SK-N-SH (cell line): ENCODE measurements at regions of chr14 and their contacts with region 1.

Region 1: GRCh38 chr14:100440187-100440631 is 117.1 kb downstream of the SLC25A47 start:
- DNase-seq: peak; percentile 66
- H3K4me3 ChIP-seq: peak overlapping the region; percentile 0 to 12; a peak in 2 of 4 replicates
- H3K27ac ChIP-seq: peak overlapping the region; percentile 68 to 100
- H3K4me1 ChIP-seq: peaks cover 34 to 95% of the 10 kb centered on the region in 2 experiments
- H3K27me3 ChIP-seq: no peaks in the 10 kb centered on the region
- CTCF ChIP-seq: peak; percentile 72
- EP300 ChIP-seq: no peak
- RAD21 ChIP-seq: peak; percentile 89

Region 2: GRCh38 chr14:100417466-100417865 is 22.7 kb before region 1 on chr14:
- CTCF ChIA-PET with region 1: interaction called, 148 read pairs
- POLR2A ChIA-PET with region 1: interaction called, 45 read pairs
- DNase-seq: peak; percentile 85
- H3K4me3 ChIP-seq: no peak overlapping the region; a peak in 1 of 4 replicates
- H3K27ac ChIP-seq: peak overlapping the region; percentile 52 to 84
- H3K4me1 ChIP-seq: peaks cover 9 to 53% of the 10 kb centered on the region in 2 experiments
- H3K27me3 ChIP-seq: no peaks in the 10 kb centered on the region
- CTCF ChIP-seq: peak; percentile 88
- EP300 ChIP-seq: peak in 1 of 2 experiments; percentile 49; a peak in 1 of 4 replicates
- RAD21 ChIP-seq: peak; percentile 98

Region 3: DNA sequence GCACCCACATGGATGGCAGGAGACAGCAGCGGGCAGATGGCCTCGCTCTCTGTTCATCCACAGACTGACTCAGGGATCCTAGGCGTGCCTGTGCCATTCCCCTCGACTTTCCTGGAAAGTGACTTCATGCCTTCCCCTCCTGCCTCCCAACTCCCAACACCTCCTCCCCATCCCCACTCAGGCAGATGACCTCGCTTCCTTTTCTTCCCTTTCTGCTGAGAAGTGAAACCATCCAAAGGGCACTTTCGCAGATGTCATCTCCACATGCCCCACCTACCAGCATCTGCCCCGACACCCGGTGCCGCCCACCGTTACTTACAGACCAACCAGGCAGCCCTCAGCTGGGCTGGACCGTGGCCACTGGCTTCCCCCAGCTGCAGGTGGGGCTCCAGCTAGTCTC is 117.4 kb after region 1 on chr14:
- CTCF ChIA-PET with region 1: interaction called, 9 read pairs
- POLR2A ChIA-PET with region 1: interaction called, 10 read pairs
- DNase-seq: no peak
- H3K4me3 ChIP-seq: no peak overlapping the region
- H3K27ac ChIP-seq: peak overlapping the region in 1 of 2 experiments; percentile 78; a peak in 1 of 4 replicates
- H3K4me1 ChIP-seq: peaks cover 0 to 97% of the 10 kb centered on the region in 2 experiments; a peak in 1 of 4 replicates
- H3K27me3 ChIP-seq: no peaks in the 10 kb centered on the region
- CTCF ChIP-seq: no peak
- EP300 ChIP-seq: no peak
- RAD21 ChIP-seq: no peak

Region 4: GRCh38 chr14:100629696-100630095 is 189.5 kb after region 1 on chr14:
- CTCF ChIA-PET with region 1: no interaction called
- POLR2A ChIA-PET with region 1: no interaction called
- DNase-seq: no peak
- H3K4me3 ChIP-seq: no peak overlapping the region
- H3K27ac ChIP-seq: no peak overlapping the region
- H3K4me1 ChIP-seq: peaks cover 0 to 12% of the 10 kb centered on the region in 2 experiments; a peak in 1 of 4 replicates
- H3K27me3 ChIP-seq: peaks cover 10% of the 10 kb centered on the region; the same call in 1 of the 2 replicates
- CTCF ChIP-seq: no peak
- EP300 ChIP-seq: no peak
- RAD21 ChIP-seq: no peak

Region 5: DNA sequence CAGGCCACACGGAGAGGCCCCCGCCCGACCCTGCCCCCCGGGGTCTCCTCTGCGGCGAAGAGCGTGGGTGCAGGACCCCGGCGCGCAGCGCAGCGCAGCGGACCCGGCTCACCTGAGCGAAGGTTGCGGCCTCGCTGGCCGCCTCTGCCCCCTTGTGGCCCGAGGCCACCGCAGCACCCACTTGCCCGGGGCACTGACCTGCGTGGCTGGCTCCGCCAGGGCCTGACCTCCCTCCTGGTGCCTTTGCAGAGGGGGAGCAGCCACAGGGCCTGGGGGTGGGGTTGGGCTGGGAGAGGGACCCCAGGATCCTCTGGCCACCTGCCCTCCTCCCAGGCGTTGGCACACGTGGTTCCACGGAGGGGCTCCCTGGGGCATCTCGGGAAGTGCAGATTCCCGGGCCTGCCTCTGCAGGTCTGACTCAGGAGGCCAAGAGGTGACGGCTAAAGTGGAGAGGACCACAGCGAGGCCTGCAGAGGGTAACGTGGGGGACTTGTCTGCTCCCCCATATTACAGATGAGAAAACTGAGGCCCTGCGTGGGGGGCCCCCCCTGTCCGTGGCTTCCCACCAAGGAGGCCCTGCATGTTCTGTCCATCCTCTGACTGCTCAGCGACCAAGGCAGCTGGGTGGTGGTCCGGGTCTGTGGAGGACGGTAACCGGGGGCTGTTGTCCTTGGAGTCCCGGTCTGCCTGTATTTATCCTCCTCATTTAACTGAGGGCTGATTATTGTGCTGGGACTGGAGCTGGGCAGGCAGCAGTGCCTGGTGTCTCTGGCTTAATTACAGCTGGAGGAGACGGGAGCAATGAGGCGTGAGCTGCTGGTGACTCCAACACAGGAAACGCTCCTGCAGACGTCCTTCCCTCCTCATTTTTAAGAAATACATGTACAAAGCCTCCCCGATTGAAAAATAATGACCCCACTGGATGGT is 214.9 kb after region 1 on chr14:
- CTCF ChIA-PET with region 1: interaction called, 58 read pairs
- POLR2A ChIA-PET with region 1: interaction called, 6 read pairs
- DNase-seq: peak; percentile 84
- H3K4me3 ChIP-seq: no peak overlapping the region
- H3K27ac ChIP-seq: peak overlapping the region in 1 of 2 experiments; percentile 92; a peak in 2 of 4 replicates
- H3K4me1 ChIP-seq: peaks cover 0 to 75% of the 10 kb centered on the region in 2 experiments; a peak in 2 of 4 replicates
- H3K27me3 ChIP-seq: no peaks in the 10 kb centered on the region
- CTCF ChIP-seq: peak; percentile 59
- EP300 ChIP-seq: no peak
- RAD21 ChIP-seq: peak; percentile 58

Region 6: DNA sequence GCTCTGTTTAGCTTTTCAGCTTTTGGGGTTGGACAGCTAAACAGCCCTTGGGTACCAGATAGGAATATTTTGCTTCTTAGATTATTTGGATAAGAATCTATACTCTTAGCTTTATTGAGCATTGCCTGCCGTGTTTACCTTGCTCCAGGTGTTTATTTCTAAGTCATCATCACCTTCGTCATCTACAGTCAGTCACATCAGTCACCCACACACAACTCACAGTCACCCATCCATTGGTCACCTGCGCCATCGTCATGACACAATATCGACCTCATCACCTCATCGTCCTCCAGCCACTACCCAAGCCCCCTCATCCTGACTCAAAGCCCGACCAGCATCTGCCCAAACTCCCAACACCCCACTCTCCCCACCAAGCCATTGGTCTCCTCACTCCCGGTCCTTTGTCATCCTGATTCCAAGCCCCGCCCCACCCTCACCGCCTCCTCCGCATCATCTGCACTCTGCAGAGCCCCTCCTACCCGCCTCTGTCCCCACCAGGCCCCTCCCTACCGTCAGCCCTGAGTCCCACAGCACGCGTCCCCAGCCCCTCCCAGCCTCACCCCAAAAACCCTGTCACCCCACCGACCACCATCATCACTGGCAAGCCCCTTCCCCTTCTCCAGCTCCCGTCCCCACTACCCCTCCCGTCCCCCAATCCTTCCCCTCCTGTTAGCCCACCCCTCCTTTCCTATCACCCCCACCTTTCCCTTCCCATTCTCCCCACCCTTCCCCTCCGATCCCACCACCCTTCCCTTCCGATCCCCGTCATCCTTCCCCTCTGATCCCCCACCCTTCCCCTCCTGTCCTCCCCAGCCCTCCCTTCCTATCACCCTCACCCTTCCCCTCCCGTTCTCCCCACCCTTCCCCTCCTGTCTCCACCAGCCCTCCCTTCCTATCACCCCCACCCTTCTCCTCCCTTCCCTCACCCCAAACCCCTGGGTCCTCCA is 296.3 kb after region 1 on chr14:
- CTCF ChIA-PET with region 1: interaction called, 3 read pairs
- POLR2A ChIA-PET with region 1: interaction called, 17 read pairs
- DNase-seq: peak; percentile 69
- H3K4me3 ChIP-seq: no peak overlapping the region
- H3K27ac ChIP-seq: peak overlapping the region in 1 of 2 experiments; percentile 17; a peak in 2 of 4 replicates
- H3K4me1 ChIP-seq: peaks cover 0 to 40% of the 10 kb centered on the region in 2 experiments; a peak in 1 of 4 replicates
- H3K27me3 ChIP-seq: no peaks in the 10 kb centered on the region
- CTCF ChIP-seq: no peak
- EP300 ChIP-seq: no peak
- RAD21 ChIP-seq: no peak